MCF 10A (cell line): ENCODE measurements at regions of chr15 and their contacts with region 1.

Region 1: GRCh38 chr15:62782039-62782791 is 260.3 kb upstream of the TPM1 start:
- DNase-seq: peak; percentile 86
- H3K4me3 Mint-ChIP-seq: no peak overlapping the region
- H3K27ac Mint-ChIP-seq: no peak overlapping the region
- H3K4me1 Mint-ChIP-seq: peaks cover 28% of the 10 kb centered on the region
- H3K27me3 Mint-ChIP-seq: no peaks in the 10 kb centered on the region
- CTCF ChIP-seq: peak; percentile 71

Region 2: GRCh38 chr15:63038926-63039673 is 256.9 kb after region 1 on chr15:
- CTCF ChIA-PET with region 1: interaction called, 15 read pairs
- POLR2A ChIA-PET with region 1: no interaction called
- intact Hi-C with region 1: no loop called
- DNase-seq: no peak
- H3K4me3 Mint-ChIP-seq: no peak overlapping the region
- H3K27ac Mint-ChIP-seq: no peak overlapping the region
- H3K4me1 Mint-ChIP-seq: peaks cover 13% of the 10 kb centered on the region
- H3K27me3 Mint-ChIP-seq: no peaks in the 10 kb centered on the region
- CTCF ChIP-seq: no peak